Activated T-helper 1 cell treated with anti-CD3 and anti-CD28 coated beads, Interleukin-12 subunit alpha, Interleukin-12 subunit beta, Interleukin-2, Interleukin-4 antibody, amounts not matched to agents 30 ng/mL and 10 ng/mL and 1 ng/mL, durations not matched to agents 14 hours and 24 hours and 36 hours (primary cell): ENCODE measurements at regions of chr5 and their contacts with region 1.

Region 1: GRCh38 chr5:157540707-157541446 is 34.7 kb downstream of the ADAM19 start:
- DNase-seq: peak; percentile 55
- H3K4me3 Mint-ChIP-seq: peak overlapping the region; percentile 63
- H3K27ac Mint-ChIP-seq: peak overlapping the region; percentile 93
- H3K4me1 Mint-ChIP-seq: peaks cover 90% of the 10 kb centered on the region
- H3K27me3 Mint-ChIP-seq: no peaks in the 10 kb centered on the region

Region 2: GRCh38 chr5:157245477-157245876 is 295.4 kb before region 1 on chr5:
- intact Hi-C with region 1: loop called (anchors 5 kb)
- DNase-seq: no peak
- H3K4me3 Mint-ChIP-seq: no peak overlapping the region
- H3K27ac Mint-ChIP-seq: peak overlapping the region; percentile 78
- H3K4me1 Mint-ChIP-seq: peaks cover 79% of the 10 kb centered on the region
- H3K27me3 Mint-ChIP-seq: no peaks in the 10 kb centered on the region

Region 3: GRCh38 chr5:157464519-157465171 is 76.2 kb before region 1 on chr5:
- intact Hi-C with region 1: loop called (anchors 2 kb)
- DNase-seq: peak; percentile 42
- H3K4me3 Mint-ChIP-seq: peak overlapping the region; percentile 36
- H3K27ac Mint-ChIP-seq: peak overlapping the region; percentile 83
- H3K4me1 Mint-ChIP-seq: peaks cover 48% of the 10 kb centered on the region
- H3K27me3 Mint-ChIP-seq: peaks cover 17% of the 10 kb centered on the region

Region 4: GRCh38 chr5:157563929-157564716 is 23.2 kb after region 1 on chr5:
- intact Hi-C with region 1: no loop called
- DNase-seq: no peak
- H3K4me3 Mint-ChIP-seq: peak overlapping the region; percentile 67
- H3K27ac Mint-ChIP-seq: peak overlapping the region; percentile 75
- H3K4me1 Mint-ChIP-seq: peaks cover 85% of the 10 kb centered on the region
- H3K27me3 Mint-ChIP-seq: no peaks in the 10 kb centered on the region

Region 5: GRCh38 chr5:157582731-157583620 is 42.1 kb after region 1 on chr5:
- intact Hi-C with region 1: loop called (anchors 1 kb)
- DNase-seq: no peak
- H3K4me3 Mint-ChIP-seq: peak overlapping the region; percentile 48
- H3K27ac Mint-ChIP-seq: peak overlapping the region; percentile 80
- H3K4me1 Mint-ChIP-seq: peaks cover 69% of the 10 kb centered on the region
- H3K27me3 Mint-ChIP-seq: no peaks in the 10 kb centered on the region

Region 6: DNA sequence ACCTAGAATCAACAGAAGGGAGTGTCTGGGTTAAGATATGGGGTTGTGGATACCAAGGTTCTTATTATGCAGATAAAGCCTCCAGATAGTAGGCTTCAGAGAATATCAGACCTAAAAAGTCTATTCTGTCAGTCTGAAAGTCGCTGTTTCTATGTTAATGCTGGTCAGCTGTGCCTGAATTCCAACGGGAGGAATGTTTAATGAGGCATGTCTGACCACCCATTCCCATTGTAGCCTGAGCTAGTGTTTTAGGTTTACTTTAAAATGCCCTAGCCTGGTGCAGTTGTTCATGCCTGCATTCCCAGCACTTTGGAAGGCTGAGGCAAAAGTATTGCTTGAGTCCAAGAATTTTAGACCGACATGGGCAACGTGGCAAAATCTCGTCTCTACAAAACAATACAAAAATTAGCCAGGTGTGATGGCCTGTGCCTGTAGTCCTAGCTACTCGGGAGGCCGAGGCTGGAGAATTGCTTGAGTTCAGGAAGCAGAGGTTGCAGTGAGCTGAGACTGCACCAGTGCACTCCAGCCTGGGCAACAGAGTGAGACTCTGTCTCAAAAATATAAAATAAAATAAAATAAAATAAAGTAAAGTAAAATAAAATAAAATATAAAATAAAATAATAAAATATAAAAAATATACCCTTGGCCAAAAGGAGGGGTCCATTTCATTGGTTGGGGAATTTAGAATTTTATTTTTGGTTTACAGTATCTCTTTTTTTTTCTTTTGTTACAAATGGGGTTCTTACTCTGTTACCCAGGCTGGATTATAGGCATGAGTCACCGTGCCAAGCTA is 119.2 kb after region 1 on chr5:
- intact Hi-C with region 1: no loop called
- DNase-seq: no peak
- H3K4me3 Mint-ChIP-seq: no peak overlapping the region
- H3K27ac Mint-ChIP-seq: no peak overlapping the region
- H3K4me1 Mint-ChIP-seq: no peaks in the 10 kb centered on the region
- H3K27me3 Mint-ChIP-seq: peaks cover 3% of the 10 kb centered on the region

Region 7: DNA sequence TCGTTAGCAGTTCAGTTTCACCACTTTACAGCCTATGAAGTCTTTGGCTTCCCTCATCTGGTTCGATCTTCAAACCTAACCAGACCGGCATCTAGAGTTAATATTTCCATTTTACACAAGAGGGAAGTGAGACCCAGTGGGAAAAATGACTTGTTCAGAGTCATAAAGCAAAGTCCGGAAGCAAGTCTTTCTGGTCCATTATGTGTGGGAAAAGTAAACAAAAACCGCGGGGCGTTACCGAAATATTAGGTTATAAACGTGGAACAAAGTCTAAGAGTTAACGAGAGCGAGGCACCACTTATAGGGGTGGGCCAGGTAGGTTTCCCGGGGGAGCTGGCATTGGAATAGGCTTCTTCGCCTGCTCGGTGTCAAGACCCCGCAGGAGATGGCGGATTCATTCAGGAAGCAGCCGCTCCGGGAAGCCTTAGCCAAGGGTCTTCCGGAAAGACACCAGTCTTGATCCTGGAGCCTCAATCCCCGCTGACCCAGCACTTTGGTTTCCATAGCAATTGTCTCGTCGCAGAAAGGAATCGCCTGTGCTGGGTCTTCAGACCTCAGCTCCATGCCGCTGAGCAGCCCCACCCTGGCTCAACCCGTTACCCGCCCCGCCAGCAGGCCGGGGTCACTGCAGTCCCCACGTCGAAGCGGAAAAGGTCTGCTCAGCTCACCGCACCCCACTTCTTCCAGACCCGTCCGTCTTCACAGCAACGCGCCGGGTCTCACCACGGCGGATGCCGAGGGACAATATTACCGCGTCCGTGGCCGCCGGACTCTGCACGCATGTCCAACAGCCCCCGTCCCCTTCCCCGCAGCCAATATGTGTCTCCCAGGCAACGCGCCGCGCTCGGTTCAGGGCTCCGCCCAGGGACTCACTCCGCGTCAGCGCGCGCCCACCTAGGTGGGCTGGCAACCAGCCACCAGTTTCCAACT is 130.1 kb after region 1 on chr5 and contains the start of gene C5orf52:
- intact Hi-C with region 1: loop called (anchors 2 kb)
- DNase-seq: no peak
- H3K4me3 Mint-ChIP-seq: peak within 1 kb of the TSS; percentile 93
- H3K27ac Mint-ChIP-seq: peak within 1 kb of the TSS; percentile 82
- H3K4me1 Mint-ChIP-seq: peaks cover 42% of the 10 kb centered on the region
- H3K27me3 Mint-ChIP-seq: peaks cover 2% of the 10 kb centered on the region
- total RNA-seq, gene C5orf52: 0.39 TPM in 1 of 2 replicates, not detected in the other

Region 8: GRCh38 chr5:157743163-157744050 is 202.5 kb after region 1 on chr5 and contains the start of gene LSM11:
- intact Hi-C with region 1: loop called (anchors 1 kb)
- DNase-seq: peak; percentile 90
- H3K4me3 Mint-ChIP-seq: peak within 1 kb of the TSS; percentile 98
- H3K27ac Mint-ChIP-seq: peak within 1 kb of the TSS; percentile 93
- H3K4me1 Mint-ChIP-seq: peaks cover 46% of the 10 kb centered on the region
- H3K27me3 Mint-ChIP-seq: peaks cover 3% of the 10 kb centered on the region
- total RNA-seq, gene LSM11: 8.8 and 9.0 TPM in 2 replicates

Region 9: GRCh38 chr5:158119961-158120723 is 579.3 kb after region 1 on chr5:
- intact Hi-C with region 1: no loop called
- DNase-seq: no peak
- H3K4me3 Mint-ChIP-seq: no peak overlapping the region
- H3K27ac Mint-ChIP-seq: no peak overlapping the region
- H3K4me1 Mint-ChIP-seq: no peaks in the 10 kb centered on the region
- H3K27me3 Mint-ChIP-seq: peaks cover 4% of the 10 kb centered on the region

Region 10: DNA sequence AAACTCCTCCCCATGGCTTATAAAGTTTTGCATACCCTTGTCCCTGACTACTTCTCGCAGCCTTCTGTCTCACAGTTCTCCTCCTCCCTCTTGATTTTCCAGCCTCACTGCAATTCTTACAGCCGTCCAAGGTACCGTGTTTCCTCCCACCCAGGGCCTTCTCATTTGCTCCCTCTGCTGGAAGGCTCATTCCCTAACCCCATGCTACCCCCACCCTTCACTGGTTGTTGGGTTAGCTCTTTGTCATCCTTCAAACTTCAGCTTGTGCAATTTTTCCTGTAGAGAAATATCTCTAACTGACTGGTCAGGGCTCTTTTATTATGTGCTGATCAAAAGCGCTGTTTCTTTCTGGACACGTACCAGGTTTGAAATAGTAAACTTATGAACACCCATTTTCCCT is 1229.6 kb after region 1 on chr5:
- intact Hi-C with region 1: no loop called
- DNase-seq: no peak
- H3K4me3 Mint-ChIP-seq: no peak overlapping the region
- H3K27ac Mint-ChIP-seq: no peak overlapping the region
- H3K4me1 Mint-ChIP-seq: no peaks in the 10 kb centered on the region
- H3K27me3 Mint-ChIP-seq: peaks cover 2% of the 10 kb centered on the region